ENCODE measurements at regions of chr5 and their contacts with region 1.

Region 1: GRCh38 chr5:22965960-22966359 is 112.8 kb upstream of the CDH12 start:
- DNase-seq: peak; percentile 48
- ATAC-seq: peak; percentile 53
- H3K4me3 ChIP-seq: peak overlapping the region in 1 of 5 experiments; percentile 11
- H3K4me3 Mint-ChIP-seq: peak overlapping the region; percentile 69
- H3K27ac ChIP-seq: peak overlapping the region in 1 of 2 donors; percentile 39
- H3K27ac Mint-ChIP-seq: peak overlapping the region; percentile 32
- H3K4me1 ChIP-seq: peaks cover 19 to 25% of the 10 kb centered on the region in 2 donors
- H3K4me1 Mint-ChIP-seq: peaks cover 41% of the 10 kb centered on the region
- H3K27me3 ChIP-seq: no peaks in the 10 kb centered on the region
- H3K27me3 Mint-ChIP-seq: no peaks in the 10 kb centered on the region
- CTCF ChIP-seq: no peak

Region 2: GRCh38 chr5:22708770-22709328 is 257.1 kb before region 1 on chr5:
- CTCF ChIA-PET with region 1: no interaction called
- POLR2A ChIA-PET with region 1: no interaction called
- intact Hi-C with region 1: no loop called
- DNase-seq: no peak
- ATAC-seq: no peak
- H3K4me3 ChIP-seq: no peak overlapping the region
- H3K4me3 Mint-ChIP-seq: no peak overlapping the region
- H3K27ac ChIP-seq: no peak overlapping the region
- H3K27ac Mint-ChIP-seq: no peak overlapping the region
- H3K4me1 ChIP-seq: no peaks in the 10 kb centered on the region
- H3K4me1 Mint-ChIP-seq: no peaks in the 10 kb centered on the region
- H3K27me3 ChIP-seq: no peaks in the 10 kb centered on the region
- H3K27me3 Mint-ChIP-seq: no peaks in the 10 kb centered on the region
- CTCF ChIP-seq: no peak

Region 3: GRCh38 chr5:23012842-23013241 is 46.9 kb after region 1 on chr5:
- CTCF ChIA-PET with region 1: no interaction called
- POLR2A ChIA-PET with region 1: no interaction called
- intact Hi-C with region 1: loop called (anchors 5 kb)
- DNase-seq: peak; percentile 29
- ATAC-seq: no peak
- H3K4me3 ChIP-seq: peak overlapping the region in 4 of 5 experiments; percentile 18 to 62 (median 36)
- H3K4me3 Mint-ChIP-seq: peak overlapping the region; percentile 93
- H3K27ac ChIP-seq: peak overlapping the region in 1 of 2 donors; percentile 12
- H3K27ac Mint-ChIP-seq: peak overlapping the region; percentile 56
- H3K4me1 ChIP-seq: no peaks in the 10 kb centered on the region
- H3K4me1 Mint-ChIP-seq: peaks cover 8% of the 10 kb centered on the region
- H3K27me3 ChIP-seq: no peaks in the 10 kb centered on the region
- H3K27me3 Mint-ChIP-seq: no peaks in the 10 kb centered on the region
- CTCF ChIP-seq: no peak